HCT116 (cell line): ENCODE measurements at regions of chr4 and their contacts with region 1.

Region 1: GRCh38 chr4:99808260-99808857 is 8.3 kb upstream of the DAPP1 start:
- DNase-seq: peak; percentile 63
- ATAC-seq: peak; percentile 98
- H3K4me3 ChIP-seq: no peak overlapping the region
- H3K27ac ChIP-seq: no peak overlapping the region
- H3K4me1 ChIP-seq: no peaks in the 10 kb centered on the region
- H3K27me3 ChIP-seq: peaks cover 5% of the 10 kb centered on the region; the same call in 1 of the 2 replicates
- CTCF ChIP-seq: peak; percentile 81 to 91 (median 89)
- POLR2A ChIP-seq: no peak
- RAD21 ChIP-seq: peak; percentile 94

Region 2: GRCh38 chr4:99414389-99414788 is 394.0 kb before region 1 on chr4:
- CTCF ChIA-PET with region 1: interaction called, 4 read pairs
- POLR2A ChIA-PET with region 1: no interaction called
- RAD21 ChIA-PET with region 1: no interaction called
- intact Hi-C with region 1: loop called (anchors 5 kb)
- DNase-seq: no peak
- ATAC-seq: no peak
- H3K4me3 ChIP-seq: no peak overlapping the region
- H3K27ac ChIP-seq: no peak overlapping the region
- H3K4me1 ChIP-seq: no peaks in the 10 kb centered on the region
- H3K27me3 ChIP-seq: no peaks in the 10 kb centered on the region
- CTCF ChIP-seq: no peak
- POLR2A ChIP-seq: no peak
- RAD21 ChIP-seq: no peak

Region 3: DNA sequence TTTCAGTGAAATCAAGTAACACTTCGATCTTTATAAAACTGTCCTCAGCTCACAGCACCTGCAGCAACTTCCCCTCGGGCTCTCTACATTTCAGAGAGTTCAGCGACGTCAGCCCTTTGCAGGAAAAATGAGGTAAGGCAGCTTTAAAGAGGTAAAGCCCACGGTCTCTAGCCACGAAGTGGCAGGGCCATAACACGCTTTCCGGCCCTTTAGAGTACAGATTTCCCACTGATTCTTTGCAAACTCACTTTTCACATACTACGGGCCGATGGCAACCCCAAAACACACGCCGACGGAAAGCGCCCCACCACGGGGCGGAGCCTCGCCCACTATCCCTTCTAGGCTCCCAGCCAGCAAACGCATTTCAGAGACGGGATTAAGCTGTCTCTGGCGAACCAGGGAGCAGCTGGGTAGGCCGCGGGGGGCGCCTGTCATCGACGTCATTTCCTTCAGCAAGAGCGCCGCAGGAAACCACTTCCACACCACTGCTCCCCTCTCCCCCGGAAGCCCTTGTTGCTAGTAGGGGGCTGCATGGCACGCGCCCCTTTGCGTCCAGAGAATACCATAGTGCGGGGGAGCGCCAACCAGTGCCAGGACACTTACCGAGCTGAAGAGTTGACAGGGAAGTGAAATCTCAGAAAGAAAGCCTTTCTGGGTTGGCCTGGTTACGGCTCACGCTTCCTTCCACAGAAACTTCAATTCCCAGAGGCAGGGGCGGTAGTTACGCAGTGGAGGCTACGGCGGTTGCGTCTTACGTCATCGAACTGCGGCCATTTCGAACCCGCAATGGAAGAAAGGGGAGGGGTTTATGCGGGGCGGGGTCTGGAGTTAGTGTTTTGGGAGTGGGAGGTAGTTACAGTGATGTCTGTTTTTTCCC is 244.8 kb before region 1 on chr4 and contains the start of gene TRMT10A:
- CTCF ChIA-PET with region 1: interaction called, 14 read pairs
- POLR2A ChIA-PET with region 1: interaction called, 3 read pairs
- RAD21 ChIA-PET with region 1: interaction called, 6 read pairs
- intact Hi-C with region 1: loop called (anchors 1 kb)
- DNase-seq: peak; percentile 96
- ATAC-seq: peak; percentile 92
- H3K4me3 ChIP-seq: peak within 1 kb of the TSS; percentile 61 to 86
- H3K27ac ChIP-seq: peak within 1 kb of the TSS; percentile 75
- H3K4me1 ChIP-seq: peaks cover 0 to 18% of the 10 kb centered on the region in 2 experiments; a peak in 3 of 4 replicates
- H3K27me3 ChIP-seq: no peaks in the 10 kb centered on the region
- CTCF ChIP-seq: no peak
- POLR2A ChIP-seq: no peak
- RAD21 ChIP-seq: no peak
- total RNA-seq, gene TRMT10A: 7.4 TPM

Region 4: DNA sequence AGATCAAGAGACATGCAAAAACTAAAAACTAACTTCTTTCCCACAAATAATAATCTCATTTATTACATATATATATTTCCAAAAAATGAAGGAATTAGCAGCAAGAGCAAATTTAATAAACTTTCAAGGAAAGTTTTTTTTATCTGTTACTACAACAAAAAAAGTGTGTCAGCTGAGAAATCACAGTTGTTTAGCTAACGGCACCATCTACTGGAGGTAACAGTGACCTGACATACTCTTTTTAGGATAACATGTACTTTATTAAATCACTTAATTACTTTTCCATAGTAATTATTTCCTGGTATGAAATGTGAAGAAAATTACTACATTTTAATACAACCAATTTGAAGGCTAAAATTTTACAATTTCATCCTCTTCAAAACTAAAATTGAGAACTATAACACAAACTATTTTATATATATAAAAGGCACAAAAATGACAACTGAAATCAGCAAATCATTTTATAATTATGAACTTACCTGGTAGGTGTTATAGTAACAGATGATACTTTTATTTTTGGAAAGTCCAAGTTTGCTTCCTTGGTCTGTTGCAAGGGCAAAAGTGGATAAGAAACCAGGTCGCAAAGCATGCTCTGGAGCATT is 76.8 kb after region 1 on chr4:
- CTCF ChIA-PET with region 1: interaction called, 35 read pairs
- POLR2A ChIA-PET with region 1: no interaction called
- RAD21 ChIA-PET with region 1: interaction called, 4 to 6 read pairs
- intact Hi-C with region 1: loop called (anchors 1 kb)
- DNase-seq: peak; percentile 22
- ATAC-seq: no peak
- H3K4me3 ChIP-seq: no peak overlapping the region
- H3K27ac ChIP-seq: no peak overlapping the region
- H3K4me1 ChIP-seq: no peaks in the 10 kb centered on the region
- H3K27me3 ChIP-seq: no peaks in the 10 kb centered on the region
- CTCF ChIP-seq: peak; percentile 49 to 71 (median 62); a peak in 5 of 6 replicates
- POLR2A ChIP-seq: no peak
- RAD21 ChIP-seq: peak; percentile 83